ENCODE measurements at regions of chr5 and their contacts with region 1.

Region 1: DNA sequence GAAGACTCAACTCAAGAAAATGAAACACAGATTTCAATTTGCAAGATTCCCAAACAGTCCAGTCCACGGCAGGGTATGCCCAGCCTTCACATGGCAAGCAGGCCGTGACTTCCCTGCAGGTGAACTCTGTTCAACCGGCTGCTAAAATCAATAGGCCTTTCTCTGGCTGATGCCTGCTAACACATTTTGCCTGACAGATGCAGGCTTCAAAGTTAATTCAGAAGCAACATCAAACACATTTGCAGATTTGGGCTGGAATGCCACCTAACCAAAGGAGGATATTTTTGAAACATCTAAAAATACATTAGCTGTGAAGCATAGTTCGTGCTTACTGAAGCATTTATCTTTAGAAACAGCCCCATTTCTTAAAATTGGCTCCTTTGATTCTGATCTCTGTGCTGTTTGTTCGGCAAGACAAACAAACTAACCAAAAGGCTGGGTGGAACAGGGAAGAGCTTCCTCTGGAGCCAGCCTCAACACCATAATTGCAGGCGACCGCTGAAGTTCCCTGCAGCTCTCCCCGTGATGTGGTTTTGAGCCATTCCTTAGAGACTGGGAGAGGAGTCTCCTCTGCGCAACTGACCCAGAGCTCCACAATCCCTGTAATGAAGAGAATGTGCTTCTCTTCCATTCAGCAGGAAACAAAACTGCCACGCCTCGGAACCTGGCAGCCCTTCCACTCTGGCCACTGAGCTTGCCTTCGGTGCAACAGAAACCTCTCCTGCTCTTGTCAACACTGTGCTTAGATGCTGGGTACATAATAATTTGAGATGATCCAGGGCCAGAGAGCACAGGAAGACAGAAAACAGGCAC is 126.5 kb downstream of the MYO10 start:
- DNase-seq: peak in 1 of 2 donors; percentile 33
- H3K4me3 ChIP-seq: peak overlapping the region in 1 of 3 donors; percentile 43
- H3K27ac ChIP-seq: peak overlapping the region; percentile 7 to 57
- H3K4me1 ChIP-seq: peaks cover 0 to 3% of the 10 kb centered on the region in 2 donors
- H3K27me3 ChIP-seq: no peaks in the 10 kb centered on the region
- CTCF ChIP-seq: no peak
- POLR2A ChIP-seq: no peak

Region 2: GRCh38 chr5:15807871-15808270 is 1001.7 kb before region 1 on chr5:
- intact Hi-C with region 1: no loop called
- DNase-seq: no peak
- H3K4me3 ChIP-seq: no peak overlapping the region
- H3K27ac ChIP-seq: peak overlapping the region in 1 of 2 donors; percentile 61
- H3K4me1 ChIP-seq: no peaks in the 10 kb centered on the region
- H3K27me3 ChIP-seq: no peaks in the 10 kb centered on the region
- CTCF ChIP-seq: no peak
- POLR2A ChIP-seq: no peak

Region 3: DNA sequence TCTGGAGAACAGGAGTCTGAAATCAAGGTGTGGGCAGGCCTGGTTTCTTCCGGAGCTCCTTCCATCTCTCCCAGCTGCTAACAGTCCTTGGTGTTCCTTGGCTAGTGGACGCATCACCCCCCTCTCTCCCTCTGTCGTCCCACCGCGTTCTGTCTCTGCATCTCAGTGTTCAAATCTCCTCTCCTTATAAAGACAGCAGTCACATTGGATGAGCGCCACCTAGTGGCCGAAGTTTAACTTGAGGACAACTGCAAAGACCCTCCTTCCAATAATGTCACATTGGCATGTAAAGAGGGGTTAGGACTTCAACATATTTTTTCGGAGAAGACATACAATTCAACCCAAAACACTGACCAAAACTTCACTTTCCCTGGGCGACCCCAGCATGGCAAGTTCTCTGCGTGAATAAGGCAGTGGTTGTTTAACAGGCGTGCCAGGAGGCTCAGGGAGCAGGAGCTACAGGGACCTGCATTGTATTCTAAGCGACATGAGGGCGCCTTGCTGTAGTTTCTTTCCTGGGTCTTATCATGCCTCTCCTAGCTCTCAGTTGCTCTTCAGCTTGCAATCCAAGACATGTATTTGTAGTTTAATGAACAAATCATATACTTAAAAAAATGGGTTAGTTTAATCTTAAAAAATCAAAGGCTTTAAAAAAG is 379.9 kb after region 1 on chr5:
- intact Hi-C with region 1: loop called (anchors 5 kb)
- DNase-seq: peak; percentile 50 to 77
- H3K4me3 ChIP-seq: no peak overlapping the region
- H3K27ac ChIP-seq: peak overlapping the region in 1 of 2 donors; percentile 19
- H3K4me1 ChIP-seq: peaks cover 0 to 7% of the 10 kb centered on the region in 2 donors
- H3K27me3 ChIP-seq: no peaks in the 10 kb centered on the region
- CTCF ChIP-seq: peak; percentile 60 to 75 (median 66)
- POLR2A ChIP-seq: no peak

Measured in breast epithelium (tissue), 4 donors.